Panc1 (cell line): ENCODE measurements at regions of chr1 and their contacts with region 1.

Region 1: GRCh38 chr1:105137543-105138457 is 1388.1 kb downstream of the AMY1C start:
- DNase-seq: no peak
- ATAC-seq: peak; percentile 96
- H3K4me3 ChIP-seq: peak overlapping the region in 1 of 2 experiments; percentile 33; a peak in 2 of 4 replicates
- H3K27ac ChIP-seq: peak overlapping the region; percentile 29; the same call in 1 of the 2 replicates
- H3K4me1 ChIP-seq: no peaks in the 10 kb centered on the region
- H3K27me3 ChIP-seq: no peaks in the 10 kb centered on the region
- CTCF ChIP-seq: peak; percentile 75

Region 2: DNA sequence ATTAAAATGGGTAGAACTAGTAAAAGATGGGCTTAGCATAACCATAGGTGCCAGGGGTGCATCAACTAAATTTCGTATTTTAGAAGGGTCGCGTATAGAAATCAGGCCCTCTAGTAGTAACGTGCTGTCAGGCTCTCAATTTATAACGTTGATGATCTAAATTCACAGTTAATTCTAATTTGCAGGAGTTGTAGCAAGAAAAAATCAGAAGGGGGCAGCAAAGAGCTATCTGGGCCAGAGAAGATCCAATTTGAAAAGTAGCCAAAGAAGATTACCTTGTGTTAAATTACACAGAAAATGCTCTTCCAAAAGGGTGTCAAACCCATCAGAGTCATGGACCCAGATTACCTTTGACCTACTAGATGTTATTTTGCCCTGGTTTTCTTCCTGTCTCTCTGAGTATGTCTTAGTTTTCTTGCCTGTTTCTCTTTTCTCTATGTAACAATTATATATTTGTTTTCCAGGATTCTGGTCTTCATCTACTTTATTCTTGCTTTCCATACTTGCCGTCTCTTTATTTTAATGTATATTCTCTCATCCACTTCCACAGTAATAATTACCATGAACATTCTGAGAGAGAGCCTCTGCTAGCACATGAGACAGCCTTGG is 357.2 kb before region 1 on chr1:
- CTCF ChIA-PET with region 1: no interaction called
- POLR2A ChIA-PET with region 1: no interaction called
- in situ Hi-C with region 1: no loop called
- intact Hi-C with region 1: loop called (anchors 5 kb)
- DNase-seq: peak; percentile 12
- ATAC-seq: no peak
- H3K4me3 ChIP-seq: no peak overlapping the region
- H3K27ac ChIP-seq: peak overlapping the region; percentile 17; the same call in 1 of the 2 replicates
- H3K4me1 ChIP-seq: no peaks in the 10 kb centered on the region
- H3K27me3 ChIP-seq: no peaks in the 10 kb centered on the region
- CTCF ChIP-seq: peak; percentile 73

Region 3: GRCh38 chr1:105017587-105017986 is 120.2 kb before region 1 on chr1:
- CTCF ChIA-PET with region 1: no interaction called
- POLR2A ChIA-PET with region 1: no interaction called
- in situ Hi-C with region 1: no loop called
- intact Hi-C with region 1: no loop called
- DNase-seq: no peak
- ATAC-seq: no peak
- H3K4me3 ChIP-seq: no peak overlapping the region
- H3K27ac ChIP-seq: no peak overlapping the region
- H3K4me1 ChIP-seq: no peaks in the 10 kb centered on the region
- H3K27me3 ChIP-seq: no peaks in the 10 kb centered on the region
- CTCF ChIP-seq: no peak